Heart left ventricle (tissue), 16 donors: ENCODE measurements at regions of chr22 and their contacts with region 1.

Region 1: DNA sequence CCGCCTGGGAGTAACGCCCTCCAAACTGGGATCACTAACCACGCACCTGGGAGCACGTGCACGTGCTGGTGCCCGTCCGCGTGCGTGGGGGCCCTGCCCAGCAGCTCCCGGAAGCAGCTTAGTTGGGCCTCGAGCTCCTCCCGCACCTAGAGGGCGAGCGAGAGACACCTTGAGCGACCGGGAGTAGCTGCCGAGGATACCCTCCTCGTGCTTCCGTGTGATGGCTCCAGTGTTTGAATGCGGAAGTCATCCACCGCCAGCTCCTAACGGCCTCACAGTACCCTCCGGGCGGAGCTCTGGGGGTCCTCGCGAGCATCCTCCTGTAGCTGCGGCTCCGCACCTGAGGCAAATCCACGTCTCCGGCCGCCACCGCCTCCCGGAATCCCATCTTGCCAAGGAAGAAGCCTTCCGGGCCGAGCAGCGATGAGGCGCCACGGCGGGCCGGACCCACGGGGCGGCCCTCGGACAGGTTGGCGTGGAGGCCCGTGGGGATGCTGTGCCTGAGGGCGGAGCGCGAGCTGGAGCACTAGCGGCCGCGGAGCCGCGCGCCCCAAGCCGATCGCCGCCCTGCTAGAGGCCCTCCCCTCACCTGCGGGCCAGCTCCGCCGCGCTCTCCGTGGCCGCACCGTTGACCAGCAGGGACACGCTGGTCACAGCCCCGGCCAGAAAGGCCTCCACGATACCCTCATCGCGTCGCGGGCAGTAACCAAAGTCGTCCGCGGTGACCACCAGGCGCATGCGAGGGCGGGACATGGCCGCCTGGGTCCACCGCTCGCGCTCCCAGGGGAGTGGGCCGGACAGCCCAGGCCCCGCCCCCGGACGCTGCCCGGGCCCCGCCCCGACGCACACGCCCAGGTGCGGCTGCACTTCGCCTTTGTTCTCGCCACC is at the start of gene YDJC:
- DNase-seq: peak; percentile 92 to 97 (median 93)
- ATAC-seq: peak; percentile 89 to 98 (median 97)
- H3K4me3 ChIP-seq: peak within 1 kb of the TSS; percentile 60 to 97 (median 69)
- H3K27ac ChIP-seq: peak within 1 kb of the TSS in 11 of 12 donors; percentile 4 to 84 (median 55)
- H3K4me1 ChIP-seq: peaks cover 0 to 37% (median 17%) of the 10 kb centered on the region in 12 donors
- H3K27me3 ChIP-seq: no peaks in the 10 kb centered on the region
- CTCF ChIP-seq: peak in 11 of 12 donors; percentile 32 to 98 (median 91)
- POLR2A ChIP-seq: peak in 1 of 2 donors; percentile 59
- total RNA-seq, gene YDJC: 3.0 to 19.8 (median 5.4) TPM

Region 2: GRCh38 chr22:21579518-21580147 is 49.9 kb before region 1 on chr22:
- intact Hi-C with region 1: loop called in 4 of 10 experiments (anchors 5 to 10 kb)
- DNase-seq: no peak
- ATAC-seq: no peak
- H3K4me3 ChIP-seq: no peak overlapping the region
- H3K27ac ChIP-seq: no peak overlapping the region
- H3K4me1 ChIP-seq: peaks cover 0 to 50% (median 24%) of the 10 kb centered on the region in 12 donors
- H3K27me3 ChIP-seq: no peaks in the 10 kb centered on the region
- CTCF ChIP-seq: no peak
- POLR2A ChIP-seq: no peak

Region 3: DNA sequence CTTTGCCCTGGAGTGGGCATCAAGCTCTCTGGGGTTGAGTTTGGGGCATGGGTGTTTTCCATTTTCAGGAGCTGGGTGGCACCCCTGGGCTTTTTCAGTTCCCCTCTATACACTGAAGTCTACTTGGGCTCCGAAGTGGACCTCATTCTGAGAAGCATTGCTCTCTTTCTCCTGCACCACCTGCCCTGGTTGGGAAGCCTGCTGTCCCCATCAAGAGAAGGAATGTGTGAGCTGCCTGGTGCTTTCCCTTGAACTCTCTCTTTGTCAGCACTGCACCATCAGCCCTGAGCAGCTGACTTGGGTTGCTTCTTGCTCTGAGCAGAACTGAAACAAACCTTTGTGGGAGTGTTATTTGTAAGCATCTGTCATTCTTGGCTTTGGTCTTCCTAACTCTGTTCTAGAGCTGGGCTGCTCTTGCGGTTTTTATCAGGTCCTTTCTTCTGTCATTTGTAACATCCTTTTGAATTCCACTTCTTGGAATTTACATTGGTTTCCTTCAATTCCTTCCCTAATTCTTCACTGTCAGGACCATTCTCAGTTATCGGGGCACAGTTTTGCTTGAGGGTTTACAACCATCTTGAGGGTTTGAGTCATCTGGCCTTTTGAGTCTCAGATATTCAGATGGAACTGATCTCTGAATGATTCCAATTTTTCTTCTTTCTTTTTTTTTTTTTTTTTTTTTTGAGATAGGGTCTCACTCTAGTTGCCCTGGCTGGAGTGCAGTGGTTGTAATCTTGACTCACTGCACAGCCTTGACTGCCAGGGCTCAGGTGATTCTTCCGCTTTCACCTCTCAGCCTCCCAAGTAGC is 41.5 kb before region 1 on chr22:
- intact Hi-C with region 1: loop called in 2 of 10 experiments (anchors 5 to 10 kb)
- DNase-seq: no peak
- ATAC-seq: peak in 3 of 4 donors; percentile 5 to 29 (median 25)
- H3K4me3 ChIP-seq: no peak overlapping the region
- H3K27ac ChIP-seq: no peak overlapping the region
- H3K4me1 ChIP-seq: peaks cover 5 to 71% (median 51%) of the 10 kb centered on the region in 12 donors
- H3K27me3 ChIP-seq: no peaks in the 10 kb centered on the region
- CTCF ChIP-seq: no peak
- POLR2A ChIP-seq: no peak

Region 4: DNA sequence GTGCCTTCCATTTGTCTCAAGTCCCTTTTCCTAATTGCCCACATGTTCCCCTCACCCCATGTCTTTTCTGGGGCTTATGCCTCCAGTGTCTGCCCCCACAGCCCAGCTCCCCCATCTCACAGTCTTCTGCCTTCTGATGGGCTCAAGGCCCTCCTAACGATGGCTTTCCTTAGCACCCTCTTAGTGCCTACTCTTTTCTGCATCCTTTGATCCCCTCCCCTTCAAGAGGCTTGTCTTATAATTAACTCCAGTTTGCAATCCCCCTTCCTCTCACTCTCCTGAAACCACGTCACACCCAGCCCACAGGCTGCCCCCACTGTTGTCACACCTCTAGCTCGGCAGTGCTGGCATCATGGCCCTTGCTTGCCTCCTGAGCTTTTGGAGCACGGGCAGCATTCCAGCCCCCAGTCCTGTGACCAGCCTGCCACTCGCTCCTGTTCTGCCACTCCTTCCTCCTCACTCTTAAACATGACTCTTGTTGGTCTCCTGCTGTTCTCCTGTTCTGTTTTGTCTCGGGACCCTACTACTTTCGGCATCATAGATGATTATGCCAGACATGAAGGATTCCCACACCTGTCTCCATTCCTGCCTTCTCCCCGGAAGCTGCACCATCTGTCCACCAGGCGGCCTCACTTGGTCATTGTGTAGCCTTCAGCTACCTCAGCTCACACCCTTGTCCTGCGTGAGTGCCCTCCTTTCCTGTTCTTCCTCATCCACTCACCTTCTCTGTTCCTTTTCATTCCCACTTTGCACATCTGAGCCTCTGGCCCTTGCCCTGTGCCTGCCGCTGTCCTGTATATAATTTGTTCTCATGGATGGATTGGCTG is 35.9 kb before region 1 on chr22:
- intact Hi-C with region 1: loop called in 2 of 10 experiments (anchors 5 to 10 kb)
- DNase-seq: peak; percentile 59 to 82 (median 70)
- ATAC-seq: peak; percentile 49 to 79 (median 56)
- H3K4me3 ChIP-seq: no peak overlapping the region
- H3K27ac ChIP-seq: peak overlapping the region in 3 of 12 donors; percentile 3 to 48 (median 23)
- H3K4me1 ChIP-seq: peaks cover 5 to 69% (median 49%) of the 10 kb centered on the region in 12 donors
- H3K27me3 ChIP-seq: no peaks in the 10 kb centered on the region
- CTCF ChIP-seq: peak in 6 of 12 donors; percentile 13 to 32 (median 22)
- POLR2A ChIP-seq: no peak

Region 5: GRCh38 chr22:21726650-21727049 is 97.1 kb after region 1 on chr22:
- intact Hi-C with region 1: no loop called
- DNase-seq: no peak
- ATAC-seq: peak in 1 of 4 donors; percentile 33
- H3K4me3 ChIP-seq: no peak overlapping the region
- H3K27ac ChIP-seq: no peak overlapping the region
- H3K4me1 ChIP-seq: no peaks in the 10 kb centered on the region
- H3K27me3 ChIP-seq: no peaks in the 10 kb centered on the region
- CTCF ChIP-seq: no peak
- POLR2A ChIP-seq: no peak